ENCODE measurements at regions of chr5 and their contacts with region 1.

Region 1: DNA sequence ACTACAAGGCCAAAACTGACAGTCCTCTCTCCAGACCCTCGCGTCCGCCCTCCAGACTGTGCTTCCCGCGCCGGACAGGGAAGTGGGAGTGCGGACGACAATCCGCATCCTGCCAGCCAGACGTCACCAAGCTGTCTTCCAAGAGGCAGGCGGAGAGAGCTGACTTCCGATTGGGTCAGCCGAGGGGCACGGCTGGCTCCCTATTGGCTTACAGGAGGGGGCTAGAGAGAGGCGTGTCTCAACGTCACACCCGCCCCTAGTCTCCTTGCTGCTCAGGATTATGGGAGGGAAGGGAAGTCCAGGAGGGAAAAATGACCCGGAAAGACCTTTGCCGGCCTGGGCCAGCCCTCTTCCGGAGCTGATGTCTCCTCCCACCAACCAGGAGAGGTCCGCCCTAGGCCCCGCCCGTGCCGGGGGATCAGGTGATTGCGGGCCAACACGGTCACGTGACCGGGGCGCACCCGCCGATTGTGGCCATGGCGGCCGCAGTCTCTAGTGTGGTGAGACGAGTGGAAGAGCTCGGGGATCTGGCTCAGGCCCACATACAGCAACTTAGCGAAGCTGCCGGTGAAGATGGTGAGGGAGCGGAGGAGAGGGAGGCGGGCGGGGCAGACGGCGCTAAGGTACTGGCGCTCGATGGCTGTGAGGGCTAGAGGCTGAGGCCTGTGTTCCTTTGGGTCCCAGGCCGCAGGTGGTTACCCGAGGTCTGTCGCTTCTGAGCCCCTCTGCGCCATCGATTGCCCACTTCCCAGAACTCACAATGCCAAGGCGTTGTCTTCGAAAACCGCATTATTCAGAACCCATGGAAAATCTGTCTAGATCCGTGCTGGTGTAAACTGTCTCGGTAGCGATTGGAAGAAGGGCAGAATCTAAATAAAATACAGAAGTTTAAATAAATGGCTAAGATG is at the start of gene RIMOC1:
- H3K4me3 Mint-ChIP-seq: peak within 1 kb of the TSS; percentile 95
- H3K27ac Mint-ChIP-seq: peak within 1 kb of the TSS; percentile 99
- H3K4me1 Mint-ChIP-seq: peaks cover 45% of the 10 kb centered on the region
- H3K27me3 Mint-ChIP-seq: peaks cover 9% of the 10 kb centered on the region

Region 2: GRCh38 chr5:40834849-40835787 is 1069.0 kb before region 1 on chr5 and contains the start of gene RPL37:
- intact Hi-C with region 1: loop called (anchors 10 kb)
- H3K4me3 Mint-ChIP-seq: peak within 1 kb of the TSS; percentile 97
- H3K27ac Mint-ChIP-seq: peak within 1 kb of the TSS; percentile 98
- H3K4me1 Mint-ChIP-seq: peaks cover 39% of the 10 kb centered on the region
- H3K27me3 Mint-ChIP-seq: peaks cover 2% of the 10 kb centered on the region

Region 3: GRCh38 chr5:41869739-41870626 is 34.2 kb before region 1 on chr5 and contains the start of gene OXCT1:
- intact Hi-C with region 1: loop called (anchors 1 kb)
- H3K4me3 Mint-ChIP-seq: peak within 1 kb of the TSS; percentile 87
- H3K27ac Mint-ChIP-seq: peak within 1 kb of the TSS; percentile 71
- H3K4me1 Mint-ChIP-seq: peaks cover 19% of the 10 kb centered on the region
- H3K27me3 Mint-ChIP-seq: peaks cover 19% of the 10 kb centered on the region

Region 4: DNA sequence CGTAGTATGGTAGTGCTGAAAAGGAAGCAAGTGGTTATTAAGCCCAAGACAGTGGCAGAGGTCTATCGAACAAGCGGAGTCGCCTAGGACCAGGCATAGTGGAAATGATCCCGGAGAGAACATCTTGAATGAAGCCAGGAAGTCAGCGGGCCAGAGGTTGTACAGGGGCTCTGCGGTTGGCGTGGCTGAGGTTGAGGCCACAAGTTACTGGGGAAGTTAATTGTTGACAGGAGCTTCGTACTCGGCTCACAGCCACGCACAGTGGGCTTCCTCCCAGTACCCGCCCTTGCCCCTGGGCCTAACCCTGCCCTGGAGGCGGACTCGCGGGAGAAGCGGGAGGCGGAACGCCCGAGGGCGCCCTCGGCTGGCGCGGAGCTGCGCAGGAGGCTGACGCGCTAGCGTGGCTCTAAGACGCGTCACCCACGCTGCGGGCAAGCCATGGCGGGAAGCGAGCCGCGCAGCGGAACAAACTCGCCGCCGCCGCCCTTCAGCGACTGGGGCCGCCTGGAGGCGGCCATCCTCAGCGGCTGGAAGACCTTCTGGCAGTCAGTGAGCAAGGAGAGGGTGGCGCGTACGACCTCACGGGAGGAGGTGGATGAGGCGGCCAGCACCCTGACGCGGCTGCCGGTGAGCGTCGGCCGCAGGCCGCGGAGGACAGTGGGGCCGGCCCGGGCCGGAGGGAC is 20.9 kb after region 1 on chr5 and contains the start of gene FBXO4:
- intact Hi-C with region 1: loop called (anchors 1 kb)
- H3K4me3 Mint-ChIP-seq: peak within 1 kb of the TSS; percentile 93
- H3K27ac Mint-ChIP-seq: peak within 1 kb of the TSS; percentile 99
- H3K4me1 Mint-ChIP-seq: peaks cover 28% of the 10 kb centered on the region
- H3K27me3 Mint-ChIP-seq: no peaks in the 10 kb centered on the region

Region 5: GRCh38 chr5:42491699-42492098 is 587.6 kb after region 1 on chr5:
- intact Hi-C with region 1: no loop called
- H3K4me3 Mint-ChIP-seq: no peak overlapping the region
- H3K27ac Mint-ChIP-seq: no peak overlapping the region
- H3K4me1 Mint-ChIP-seq: no peaks in the 10 kb centered on the region
- H3K27me3 Mint-ChIP-seq: no peaks in the 10 kb centered on the region

Region 6: DNA sequence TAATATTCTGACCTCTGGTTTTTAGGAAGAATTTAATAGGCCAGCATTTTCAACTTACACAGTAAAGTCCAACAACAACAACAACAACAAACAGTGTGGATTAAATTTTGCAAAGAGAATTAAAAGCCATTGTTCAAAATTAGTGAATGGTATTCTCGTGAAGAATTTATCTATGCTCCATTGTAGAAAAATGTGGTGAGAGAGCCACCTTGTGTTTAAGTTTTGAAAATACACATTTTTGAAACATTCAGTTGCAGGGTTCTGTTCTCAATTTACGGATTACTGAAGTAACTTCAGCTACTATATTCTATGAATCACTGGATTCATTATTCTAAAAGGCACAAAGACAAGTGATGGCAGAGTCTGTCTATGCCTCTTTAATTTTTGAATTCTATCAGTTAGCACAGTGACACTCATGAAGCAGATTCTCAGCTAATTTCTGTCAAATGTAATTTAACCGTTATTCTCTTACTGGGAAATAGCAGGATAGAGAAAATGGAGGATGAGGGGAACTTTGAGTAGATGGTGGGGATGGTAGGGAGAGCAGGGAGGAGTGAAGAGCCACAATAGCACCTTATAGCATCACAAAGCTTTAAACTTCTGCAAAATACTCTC is 863.5 kb after region 1 on chr5:
- intact Hi-C with region 1: no loop called
- H3K4me3 Mint-ChIP-seq: no peak overlapping the region
- H3K27ac Mint-ChIP-seq: no peak overlapping the region
- H3K4me1 Mint-ChIP-seq: no peaks in the 10 kb centered on the region
- H3K27me3 Mint-ChIP-seq: peaks cover 1% of the 10 kb centered on the region